Adrenal gland (tissue), 19 donors: ENCODE measurements at regions of chr3 and their contacts with region 1.

Region 1: DNA sequence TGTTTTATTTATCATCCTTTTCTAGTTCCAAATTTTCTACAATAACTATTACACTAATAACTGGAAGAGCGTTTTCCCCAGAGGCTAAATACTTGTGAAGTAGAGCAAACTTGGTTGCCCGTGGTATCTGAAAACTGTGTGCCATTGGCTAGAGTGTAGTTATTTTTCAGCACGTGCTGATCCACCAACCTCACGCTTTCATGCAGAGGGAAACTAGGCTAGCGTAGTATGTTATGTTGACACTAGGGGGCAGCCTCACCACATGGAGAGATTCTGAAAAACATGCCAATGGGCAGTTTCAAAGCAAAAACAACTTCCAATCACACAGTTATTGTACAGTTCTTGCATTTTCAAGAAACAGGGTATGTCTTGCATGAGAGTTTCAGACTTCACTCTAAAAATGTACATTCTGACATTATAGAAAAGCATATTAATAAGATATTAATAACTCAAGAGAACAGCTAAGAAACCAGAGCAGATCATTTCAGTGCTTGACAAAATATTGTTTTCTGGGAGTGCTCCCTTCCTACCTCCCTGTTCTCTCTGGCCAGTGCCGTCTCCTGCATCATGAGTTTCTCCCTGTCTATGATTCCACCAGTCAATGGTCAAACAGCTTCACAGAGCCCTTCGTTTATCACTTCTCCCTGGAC is 39.7 kb downstream of the SPATA12 start:
- DNase-seq: peak; percentile 73 to 92 (median 78)
- H3K4me3 ChIP-seq: no peak overlapping the region
- H3K27ac ChIP-seq: no peak overlapping the region
- H3K4me1 ChIP-seq: peaks cover 0 to 5% of the 10 kb centered on the region in 2 donors
- H3K27me3 ChIP-seq: no peaks in the 10 kb centered on the region
- CTCF ChIP-seq: peak; percentile 86 to 93 (median 91)
- POLR2A ChIP-seq: no peak

Region 2: DNA sequence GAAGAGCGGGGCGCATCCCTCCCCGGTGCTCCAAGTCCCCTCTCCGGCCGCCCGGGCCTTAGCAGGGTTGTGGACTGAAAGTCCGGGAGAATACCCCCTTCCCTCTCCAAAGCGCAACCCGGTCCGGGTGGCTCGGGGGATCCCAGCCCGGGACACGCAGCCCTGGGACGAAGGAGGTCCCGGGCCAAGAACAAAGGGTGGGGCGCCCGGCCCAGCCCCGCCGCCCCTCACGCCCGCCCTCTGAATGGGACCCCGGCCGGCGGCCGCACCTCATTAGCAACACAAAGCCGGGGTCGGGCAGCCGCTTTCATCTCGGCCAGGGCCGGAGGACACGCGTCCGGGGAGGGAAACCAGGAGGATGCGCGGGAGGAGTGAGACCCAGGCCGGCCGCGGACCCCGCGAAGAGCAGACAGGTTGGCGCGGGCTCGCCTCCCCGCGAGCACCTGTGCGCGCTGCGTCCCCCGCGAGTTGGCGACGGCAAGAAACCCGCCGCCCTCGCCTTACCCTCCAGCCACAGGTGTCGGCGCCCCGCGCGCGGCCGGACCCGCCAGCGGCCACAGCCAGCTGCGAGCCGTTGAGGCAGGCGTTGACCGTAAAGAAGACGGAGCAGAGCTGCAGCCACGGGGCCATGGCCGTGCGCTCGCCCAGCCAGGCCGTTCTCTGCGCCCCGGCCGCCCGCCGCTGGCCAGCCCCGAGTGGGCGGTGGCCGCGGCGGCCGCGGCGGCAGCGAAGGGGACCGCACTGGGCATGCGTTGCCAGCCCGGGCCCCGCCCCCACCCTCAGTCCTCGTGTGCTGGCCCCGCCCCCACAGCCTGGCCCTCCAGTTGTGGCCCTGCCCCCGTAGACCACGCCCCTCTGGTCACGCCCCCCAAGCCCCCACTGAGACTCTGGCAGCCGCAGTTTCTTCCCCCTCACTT is 64.7 kb after region 1 on chr3 and contains the start of gene IL17RD:
- intact Hi-C with region 1: loop called in 1 of 2 experiments (anchors 5 kb)
- DNase-seq: peak; percentile 61 to 81 (median 76)
- H3K4me3 ChIP-seq: peak within 1 kb of the TSS in 3 of 4 donors; percentile 23 to 81 (median 68)
- H3K27ac ChIP-seq: no peak within 1 kb of the TSS
- H3K4me1 ChIP-seq: peaks cover 3 to 11% of the 10 kb centered on the region in 2 donors
- H3K27me3 ChIP-seq: no peaks in the 10 kb centered on the region
- CTCF ChIP-seq: no peak
- POLR2A ChIP-seq: peak in 1 of 2 donors; percentile 17
- total RNA-seq, gene IL17RD: 0.93 to 7.1 (median 1.7) TPM